Transverse colon (tissue), 4 donors: ENCODE measurements at regions of chr1 and their contacts with region 1.

Region 1: GRCh38 chr1:159669338-159669737 is 45.1 kb downstream of the CRP start:
- DNase-seq: no peak
- H3K4me3 ChIP-seq: no peak overlapping the region
- H3K27ac ChIP-seq: no peak overlapping the region
- H3K4me1 ChIP-seq: no peaks in the 10 kb centered on the region
- H3K27me3 ChIP-seq: no peaks in the 10 kb centered on the region
- CTCF ChIP-seq: no peak
- EP300 ChIP-seq: no peak
- POLR2A ChIP-seq: no peak

Region 2: GRCh38 chr1:159098596-159098995 is 570.7 kb before region 1 on chr1:
- in situ Hi-C with region 1: no loop called
- intact Hi-C with region 1: no loop called
- DNase-seq: no peak
- H3K4me3 ChIP-seq: no peak overlapping the region
- H3K27ac ChIP-seq: no peak overlapping the region
- H3K4me1 ChIP-seq: no peaks in the 10 kb centered on the region
- H3K27me3 ChIP-seq: no peaks in the 10 kb centered on the region
- CTCF ChIP-seq: no peak
- EP300 ChIP-seq: no peak
- POLR2A ChIP-seq: no peak

Region 3: GRCh38 chr1:159408862-159409400 is 260.4 kb before region 1 on chr1:
- in situ Hi-C with region 1: no loop called
- intact Hi-C with region 1: no loop called
- DNase-seq: no peak
- H3K4me3 ChIP-seq: no peak overlapping the region
- H3K27ac ChIP-seq: no peak overlapping the region
- H3K4me1 ChIP-seq: no peaks in the 10 kb centered on the region
- H3K27me3 ChIP-seq: no peaks in the 10 kb centered on the region
- CTCF ChIP-seq: no peak
- EP300 ChIP-seq: no peak
- POLR2A ChIP-seq: no peak

Region 4: GRCh38 chr1:159554696-159555095 is 114.6 kb before region 1 on chr1:
- in situ Hi-C with region 1: no loop called
- intact Hi-C with region 1: no loop called
- DNase-seq: no peak
- H3K4me3 ChIP-seq: no peak overlapping the region
- H3K27ac ChIP-seq: no peak overlapping the region
- H3K4me1 ChIP-seq: no peaks in the 10 kb centered on the region
- H3K27me3 ChIP-seq: no peaks in the 10 kb centered on the region
- CTCF ChIP-seq: no peak
- EP300 ChIP-seq: no peak
- POLR2A ChIP-seq: no peak

Region 5: DNA sequence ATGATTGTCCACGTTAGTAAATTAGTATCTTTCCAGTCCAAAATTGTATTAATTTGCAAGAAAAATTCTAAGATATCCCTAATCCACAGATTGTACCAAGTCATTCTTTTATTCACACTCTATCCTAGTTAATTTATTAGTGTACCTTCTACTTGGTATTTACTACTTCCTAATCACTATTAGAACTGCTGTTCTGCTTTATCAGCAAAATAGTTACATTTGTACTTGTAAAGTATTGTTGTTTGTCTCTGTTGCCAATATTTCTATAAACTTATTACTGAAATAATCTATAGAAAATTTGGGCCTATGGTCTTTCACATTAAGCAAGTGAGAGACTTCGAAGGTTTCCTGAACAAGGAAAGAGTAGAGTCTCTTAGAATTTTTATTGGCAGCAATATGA is 50.7 kb after region 1 on chr1:
- in situ Hi-C with region 1: no loop called
- intact Hi-C with region 1: loop called (anchors 2 kb)
- DNase-seq: no peak
- H3K4me3 ChIP-seq: no peak overlapping the region
- H3K27ac ChIP-seq: no peak overlapping the region
- H3K4me1 ChIP-seq: no peaks in the 10 kb centered on the region
- H3K27me3 ChIP-seq: no peaks in the 10 kb centered on the region
- CTCF ChIP-seq: no peak
- EP300 ChIP-seq: no peak
- POLR2A ChIP-seq: no peak